ENCODE measurements at regions of chr2 and their contacts with region 1.

Region 1: DNA sequence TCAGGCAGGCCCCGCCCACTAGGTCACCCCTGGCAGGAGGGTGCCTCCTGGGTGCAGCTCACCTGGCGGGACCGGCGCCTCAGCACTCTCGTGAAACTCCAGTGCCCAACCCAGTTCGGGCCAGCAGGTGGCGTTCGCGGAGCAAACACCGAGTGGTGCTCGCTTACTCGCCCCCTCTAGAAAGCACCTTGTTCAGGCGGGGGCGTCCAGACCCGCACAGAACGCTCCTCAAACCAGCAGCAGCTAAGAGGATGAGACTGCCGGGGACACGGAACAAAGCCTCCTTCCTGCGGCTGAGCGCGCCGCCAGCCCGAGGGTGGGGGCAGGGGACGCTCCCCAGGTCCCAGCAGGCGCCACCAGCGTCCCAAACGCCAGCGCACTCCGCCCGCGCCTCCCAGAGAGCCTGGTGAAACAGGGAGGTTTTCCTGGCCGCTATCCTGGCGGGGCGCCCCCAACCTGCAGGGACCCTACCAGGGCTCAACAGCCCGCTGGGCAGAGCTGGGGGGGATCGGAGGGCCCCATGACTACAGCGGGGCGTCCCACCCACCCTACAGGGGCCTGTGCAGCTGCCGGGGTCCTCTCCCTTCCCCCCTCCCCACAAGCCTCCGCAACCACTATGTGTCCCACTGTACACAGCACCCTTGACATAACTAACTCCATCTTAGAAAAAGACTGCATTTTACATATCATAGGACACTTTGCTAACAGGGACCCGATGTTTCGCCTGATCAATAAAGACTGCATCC is 44.7 kb downstream of the MRPS5 start:
- DNase-seq: peak; percentile 85 to 96 (median 93)
- ATAC-seq: peak; percentile 75
- H3K4me3 ChIP-seq: peak overlapping the region; percentile 52
- H3K4me3 Mint-ChIP-seq: peak overlapping the region; percentile 90
- H3K27ac ChIP-seq: peak overlapping the region; percentile 37 to 92
- H3K27ac Mint-ChIP-seq: peak overlapping the region; percentile 93
- H3K4me1 ChIP-seq: peaks cover 75% of the 10 kb centered on the region
- H3K4me1 Mint-ChIP-seq: peaks cover 80% of the 10 kb centered on the region
- H3K27me3 ChIP-seq: no peaks in the 10 kb centered on the region
- H3K27me3 Mint-ChIP-seq: no peaks in the 10 kb centered on the region
- CTCF ChIP-seq: peak; percentile 95

Region 2: GRCh38 chr2:95034221-95034620 is 42.7 kb before region 1 on chr2:
- CTCF ChIA-PET with region 1: interaction called, 6 read pairs
- POLR2A ChIA-PET with region 1: interaction called, 15 read pairs
- intact Hi-C with region 1: no loop called
- DNase-seq: peak in 1 of 14 experiments; percentile 21
- ATAC-seq: no peak
- H3K4me3 ChIP-seq: no peak overlapping the region
- H3K4me3 Mint-ChIP-seq: no peak overlapping the region
- H3K27ac ChIP-seq: no peak overlapping the region
- H3K27ac Mint-ChIP-seq: peak overlapping the region; percentile 71
- H3K4me1 ChIP-seq: peaks cover 93% of the 10 kb centered on the region
- H3K4me1 Mint-ChIP-seq: peaks cover 95% of the 10 kb centered on the region
- H3K27me3 ChIP-seq: no peaks in the 10 kb centered on the region
- H3K27me3 Mint-ChIP-seq: no peaks in the 10 kb centered on the region
- CTCF ChIP-seq: no peak

Region 3: DNA sequence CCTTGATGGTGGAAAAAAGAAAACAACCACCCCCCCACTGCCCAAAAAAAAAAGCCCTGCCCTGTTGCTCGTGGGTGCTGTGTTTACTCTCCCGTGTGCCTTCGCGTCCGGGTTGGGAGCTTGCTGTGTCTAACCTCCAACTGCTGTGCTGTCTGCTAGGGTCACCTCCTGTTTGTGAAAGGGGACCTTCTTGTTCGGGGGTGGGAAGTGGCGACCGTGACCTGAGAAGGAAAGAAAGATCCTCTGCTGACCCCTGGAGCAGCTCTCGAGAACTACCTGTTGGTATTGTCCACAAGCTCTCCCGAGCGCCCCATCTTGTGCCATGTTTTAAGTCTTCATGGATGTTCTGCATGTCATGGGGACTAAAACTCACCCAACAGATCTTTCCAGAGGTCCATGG is 23.4 kb before region 1 on chr2:
- CTCF ChIA-PET with region 1: interaction called, 25 read pairs
- POLR2A ChIA-PET with region 1: interaction called, 295 read pairs
- intact Hi-C with region 1: loop called (anchors 2 kb)
- DNase-seq: peak in 3 of 14 experiments; percentile 23 to 45 (median 42)
- ATAC-seq: peak; percentile 11
- H3K4me3 ChIP-seq: no peak overlapping the region
- H3K4me3 Mint-ChIP-seq: peak overlapping the region; percentile 2
- H3K27ac ChIP-seq: no peak overlapping the region
- H3K27ac Mint-ChIP-seq: peak overlapping the region; percentile 83
- H3K4me1 ChIP-seq: peaks cover 75% of the 10 kb centered on the region
- H3K4me1 Mint-ChIP-seq: peaks cover 85% of the 10 kb centered on the region
- H3K27me3 ChIP-seq: no peaks in the 10 kb centered on the region
- H3K27me3 Mint-ChIP-seq: no peaks in the 10 kb centered on the region
- CTCF ChIP-seq: no peak

Region 4: GRCh38 chr2:95115418-95115817 is 38.5 kb after region 1 on chr2:
- CTCF ChIA-PET with region 1: interaction called, 36 read pairs
- POLR2A ChIA-PET with region 1: interaction called, 12 read pairs
- intact Hi-C with region 1: loop called (anchors 1 to 2 kb)
- DNase-seq: peak; percentile 59 to 87 (median 71)
- ATAC-seq: peak; percentile 99
- H3K4me3 ChIP-seq: no peak overlapping the region
- H3K4me3 Mint-ChIP-seq: peak overlapping the region; percentile 36
- H3K27ac ChIP-seq: no peak overlapping the region
- H3K27ac Mint-ChIP-seq: peak overlapping the region; percentile 45
- H3K4me1 ChIP-seq: peaks cover 27% of the 10 kb centered on the region
- H3K4me1 Mint-ChIP-seq: peaks cover 46% of the 10 kb centered on the region
- H3K27me3 ChIP-seq: no peaks in the 10 kb centered on the region
- H3K27me3 Mint-ChIP-seq: no peaks in the 10 kb centered on the region
- CTCF ChIP-seq: peak; percentile 89

Region 5: DNA sequence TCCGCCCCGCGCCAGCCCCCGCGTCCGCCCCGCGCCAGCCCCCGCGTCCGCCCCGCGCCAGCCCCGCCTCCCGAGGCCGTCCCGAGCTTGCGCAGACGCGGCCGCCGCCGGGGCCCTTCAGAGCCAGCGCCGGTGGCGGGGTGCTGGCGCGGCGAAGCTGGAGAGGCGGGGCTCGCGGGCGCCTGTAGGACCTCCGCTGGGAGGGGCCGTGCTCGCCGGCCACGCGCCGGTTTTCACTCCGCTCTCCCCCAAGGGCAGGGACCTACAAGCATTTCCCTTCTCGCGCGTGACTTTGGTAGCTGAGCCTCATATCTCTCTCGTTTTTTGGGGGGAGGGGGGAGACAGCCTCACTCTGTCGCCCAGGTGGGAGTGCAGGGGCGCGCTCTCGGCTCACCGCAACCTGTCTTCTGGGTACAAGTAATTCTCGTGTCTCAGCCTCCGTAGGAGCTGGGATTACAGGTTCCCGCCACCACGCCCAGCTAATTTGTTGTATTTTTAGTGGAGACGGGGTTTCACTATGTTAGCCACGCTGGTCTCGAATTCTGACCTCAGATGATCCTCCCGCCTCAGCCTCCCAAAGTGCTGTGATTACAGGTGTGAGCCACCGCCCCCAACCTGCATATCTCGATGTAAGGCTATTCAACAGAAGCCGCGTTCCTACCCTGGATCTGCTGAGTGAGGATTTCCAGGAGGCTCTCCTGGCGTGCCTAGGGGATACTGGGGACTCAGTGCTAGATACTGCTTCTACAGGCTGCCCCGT is 82.9 kb after region 1 on chr2 and contains the start of gene ZNF514:
- CTCF ChIA-PET with region 1: interaction called, 4 read pairs
- POLR2A ChIA-PET with region 1: interaction called, 15 read pairs
- intact Hi-C with region 1: loop called in 1 of 2 experiments (anchors 5 kb)
- DNase-seq: peak; percentile 49 to 90 (median 71)
- ATAC-seq: peak; percentile 85
- H3K4me3 ChIP-seq: peak within 1 kb of the TSS; percentile 95
- H3K4me3 Mint-ChIP-seq: peak within 1 kb of the TSS; percentile 95
- H3K27ac ChIP-seq: peak within 1 kb of the TSS; percentile 33 to 62
- H3K27ac Mint-ChIP-seq: peak within 1 kb of the TSS; percentile 86
- H3K4me1 ChIP-seq: peaks cover 22% of the 10 kb centered on the region
- H3K4me1 Mint-ChIP-seq: peaks cover 29% of the 10 kb centered on the region
- H3K27me3 ChIP-seq: no peaks in the 10 kb centered on the region
- H3K27me3 Mint-ChIP-seq: no peaks in the 10 kb centered on the region
- CTCF ChIP-seq: no peak
- total RNA-seq, gene ZNF514: 4.7 to 6.3 TPM

Region 6: DNA sequence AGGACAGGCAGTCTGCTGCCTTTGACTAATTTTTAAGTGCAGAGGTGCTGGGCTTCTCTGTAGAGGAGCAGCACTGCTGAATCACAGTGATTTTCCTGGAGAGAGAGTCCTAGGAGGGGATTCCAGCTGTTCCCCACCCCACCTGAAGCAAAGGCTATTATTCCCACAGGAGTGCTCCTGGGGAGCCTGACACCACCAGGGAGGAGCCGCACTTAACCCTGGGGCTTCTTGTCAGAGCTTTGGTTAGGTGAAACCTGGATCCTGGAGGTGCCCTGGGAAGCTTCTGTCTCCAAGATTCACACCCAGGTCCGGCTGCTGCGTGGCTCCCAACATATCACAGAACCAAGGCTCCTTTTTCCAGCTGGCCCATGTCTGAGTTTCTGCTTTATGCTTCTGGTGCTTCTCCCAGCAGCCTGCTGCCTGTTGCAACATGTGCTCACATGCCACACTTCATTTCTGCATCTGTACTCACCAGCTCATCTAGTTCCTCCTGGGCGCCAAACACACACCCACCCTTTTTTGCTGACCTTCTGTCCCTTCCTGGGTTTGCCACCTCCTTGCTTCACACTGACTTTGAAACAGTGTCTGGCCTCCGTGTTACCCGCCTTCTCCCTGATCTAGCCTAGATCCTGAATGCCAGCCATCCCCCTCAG is 182.9 kb after region 1 on chr2:
- CTCF ChIA-PET with region 1: no interaction called
- POLR2A ChIA-PET with region 1: no interaction called
- intact Hi-C with region 1: no loop called
- DNase-seq: no peak
- ATAC-seq: no peak
- H3K4me3 ChIP-seq: no peak overlapping the region
- H3K4me3 Mint-ChIP-seq: no peak overlapping the region
- H3K27ac ChIP-seq: no peak overlapping the region
- H3K27ac Mint-ChIP-seq: no peak overlapping the region
- H3K4me1 ChIP-seq: no peaks in the 10 kb centered on the region
- H3K4me1 Mint-ChIP-seq: no peaks in the 10 kb centered on the region
- H3K27me3 ChIP-seq: peaks cover 0 to 4% of the 10 kb centered on the region in 2 experiments
- H3K27me3 Mint-ChIP-seq: peaks cover 25% of the 10 kb centered on the region
- CTCF ChIP-seq: no peak

Region 7: DNA sequence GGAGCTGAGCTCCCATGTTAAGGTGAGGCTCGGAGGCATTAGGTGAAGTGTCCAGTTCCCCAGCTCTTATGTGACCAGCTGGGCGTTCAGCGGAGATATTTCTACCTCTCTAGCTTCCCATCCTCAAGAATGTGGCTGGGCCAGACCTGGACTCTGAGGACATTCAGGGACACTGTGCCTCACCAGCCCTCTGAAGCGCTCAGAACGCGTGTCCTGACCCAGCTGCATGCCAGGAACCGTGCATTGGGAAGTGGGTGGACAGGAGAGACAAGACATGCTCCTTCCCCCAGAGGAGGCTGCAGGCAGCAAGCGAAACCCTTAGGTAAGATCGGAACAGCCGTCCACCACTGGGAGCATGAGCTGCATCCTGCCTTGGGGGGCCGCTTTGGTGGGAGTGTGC is 995.8 kb after region 1 on chr2:
- CTCF ChIA-PET with region 1: no interaction called
- POLR2A ChIA-PET with region 1: no interaction called
- intact Hi-C with region 1: no loop called
- DNase-seq: no peak
- ATAC-seq: no peak
- H3K4me3 ChIP-seq: no peak overlapping the region
- H3K4me3 Mint-ChIP-seq: no peak overlapping the region
- H3K27ac ChIP-seq: no peak overlapping the region
- H3K27ac Mint-ChIP-seq: no peak overlapping the region
- H3K4me1 ChIP-seq: no peaks in the 10 kb centered on the region
- H3K4me1 Mint-ChIP-seq: no peaks in the 10 kb centered on the region
- H3K27me3 ChIP-seq: no peaks in the 10 kb centered on the region
- H3K27me3 Mint-ChIP-seq: no peaks in the 10 kb centered on the region
- CTCF ChIP-seq: no peak

Measured in CD4-positive, alpha-beta T cell (primary cell).